Activated CD4-positive, alpha-beta memory T cell treated with anti-CD3 and anti-CD28 coated beads for 36 hours (primary cell): ENCODE measurements at regions of chr7 and their contacts with region 1.

Region 1: DNA sequence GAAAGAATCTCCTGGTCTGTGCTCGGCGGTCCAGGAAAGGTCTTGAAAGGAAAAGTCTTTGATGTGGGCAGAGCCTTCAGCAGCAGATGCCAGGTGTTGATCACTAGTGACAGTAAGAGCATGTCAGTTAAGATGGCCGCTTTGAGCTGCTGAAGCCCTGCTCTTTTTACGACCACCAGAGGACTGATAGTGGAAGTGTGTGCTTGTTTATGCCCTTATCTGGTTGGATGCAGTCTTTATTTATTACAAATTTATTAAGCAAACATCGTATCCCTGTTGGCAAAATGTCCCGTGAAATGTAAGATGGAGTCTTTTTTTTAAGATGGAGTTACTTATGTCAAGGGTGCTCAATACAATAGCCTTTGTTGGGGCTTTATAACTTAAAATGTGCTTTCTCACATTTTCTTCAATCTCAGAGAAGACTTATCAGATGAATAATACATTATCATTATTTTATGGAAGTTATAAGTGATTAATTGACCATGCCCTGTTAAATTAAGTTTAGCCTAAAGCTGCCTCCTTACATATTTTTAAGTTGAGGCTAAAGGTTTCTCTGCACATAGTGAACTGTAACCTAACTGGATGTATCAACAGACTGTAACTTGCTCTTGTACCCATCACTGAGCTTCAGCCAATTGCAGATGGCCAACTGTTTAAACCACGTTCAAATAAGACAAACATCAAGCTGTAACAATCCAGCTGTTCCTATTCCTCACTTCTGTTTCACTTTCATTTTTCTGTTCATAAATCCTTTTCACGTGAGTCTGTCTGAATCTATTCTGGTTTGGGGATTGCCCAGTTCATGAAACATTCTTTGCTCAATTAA is 97.4 kb upstream of the PIK3CG start:
- DNase-seq: peak; percentile 18
- H3K4me3 Mint-ChIP-seq: peak overlapping the region; percentile 42
- H3K27ac Mint-ChIP-seq: peak overlapping the region; percentile 65
- H3K4me1 Mint-ChIP-seq: peaks cover 49% of the 10 kb centered on the region
- H3K27me3 Mint-ChIP-seq: no peaks in the 10 kb centered on the region

Region 2: DNA sequence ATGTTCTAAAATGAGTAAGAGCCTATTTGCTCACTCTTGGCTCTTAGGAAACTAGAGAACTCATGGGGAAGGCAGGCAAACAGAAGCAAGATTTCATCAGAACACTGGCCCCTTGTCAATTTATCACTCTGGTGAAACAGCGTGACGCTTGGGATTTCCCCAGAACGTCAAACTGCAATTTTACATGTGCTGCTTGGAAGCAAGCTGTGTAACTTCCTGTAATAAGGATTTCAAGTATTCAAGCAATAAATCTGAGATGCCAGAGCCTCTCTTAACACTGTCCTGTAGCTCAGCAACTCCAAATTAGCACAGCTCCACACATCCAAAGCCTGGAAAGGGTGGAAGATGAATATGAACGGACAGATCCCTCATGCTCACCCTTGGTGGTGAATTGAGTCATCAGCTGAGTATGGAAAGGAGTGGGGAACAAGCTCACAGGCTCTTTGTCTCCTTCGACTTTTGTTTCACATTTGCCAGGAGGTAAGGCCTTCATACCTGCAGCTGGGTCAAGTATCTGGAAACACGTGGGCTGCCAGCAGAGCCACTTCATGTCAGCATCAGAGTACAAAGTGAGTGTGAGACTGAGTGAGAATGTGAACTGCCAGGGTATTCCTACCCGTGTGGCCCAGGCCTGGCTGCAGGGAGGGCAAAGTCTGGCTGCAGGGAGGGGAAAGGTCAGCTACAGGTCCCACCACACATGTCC is 342.5 kb before region 1 on chr7:
- CTCF ChIA-PET with region 1: no interaction called
- POLR2A ChIA-PET with region 1: no interaction called
- intact Hi-C with region 1: loop called (anchors 5 kb)
- DNase-seq: peak; percentile 91
- H3K4me3 Mint-ChIP-seq: peak overlapping the region; percentile 65
- H3K27ac Mint-ChIP-seq: peak overlapping the region; percentile 97
- H3K4me1 Mint-ChIP-seq: peaks cover 81% of the 10 kb centered on the region
- H3K27me3 Mint-ChIP-seq: no peaks in the 10 kb centered on the region

Region 3: DNA sequence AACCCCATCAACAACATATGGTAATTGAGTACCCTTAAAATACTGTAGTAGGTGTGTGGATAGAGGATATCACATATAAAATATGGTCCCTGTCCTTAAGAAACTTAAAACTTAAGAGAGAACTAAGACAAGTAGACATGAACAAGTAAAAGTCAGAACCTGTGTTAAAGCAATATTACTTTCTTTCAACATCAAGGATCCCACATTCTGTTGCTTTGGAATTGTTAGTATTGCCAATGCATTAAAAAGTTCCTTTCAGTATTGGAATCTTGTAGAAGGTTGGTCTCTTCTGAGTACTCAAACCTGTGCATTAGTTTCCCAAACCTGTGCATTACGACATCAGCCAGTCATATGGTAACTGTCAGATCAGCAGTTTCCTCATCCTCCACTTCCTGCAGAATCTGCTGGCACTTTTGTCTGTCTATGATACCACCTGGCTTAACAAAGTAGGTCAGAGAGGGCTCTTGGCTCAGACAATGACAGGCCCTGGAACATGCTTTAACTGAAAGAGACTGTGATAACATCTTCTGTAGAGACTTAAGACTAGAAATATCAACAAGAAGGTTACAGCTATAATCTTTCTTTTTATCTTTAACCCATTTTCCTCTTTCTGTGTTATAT is 163.3 kb before region 1 on chr7:
- CTCF ChIA-PET with region 1: no interaction called
- POLR2A ChIA-PET with region 1: no interaction called
- intact Hi-C with region 1: loop called (anchors 1 kb)
- DNase-seq: peak; percentile 68
- H3K4me3 Mint-ChIP-seq: no peak overlapping the region
- H3K27ac Mint-ChIP-seq: no peak overlapping the region
- H3K4me1 Mint-ChIP-seq: peaks cover 15% of the 10 kb centered on the region
- H3K27me3 Mint-ChIP-seq: no peaks in the 10 kb centered on the region

Region 4: GRCh38 chr7:106744563-106745091 is 23.1 kb before region 1 on chr7:
- CTCF ChIA-PET with region 1: interaction called, 3 read pairs
- POLR2A ChIA-PET with region 1: no interaction called
- intact Hi-C with region 1: loop called (anchors 2 kb)
- DNase-seq: peak; percentile 37
- H3K4me3 Mint-ChIP-seq: no peak overlapping the region
- H3K27ac Mint-ChIP-seq: no peak overlapping the region
- H3K4me1 Mint-ChIP-seq: peaks cover 4% of the 10 kb centered on the region
- H3K27me3 Mint-ChIP-seq: peaks cover 6% of the 10 kb centered on the region

Region 5: DNA sequence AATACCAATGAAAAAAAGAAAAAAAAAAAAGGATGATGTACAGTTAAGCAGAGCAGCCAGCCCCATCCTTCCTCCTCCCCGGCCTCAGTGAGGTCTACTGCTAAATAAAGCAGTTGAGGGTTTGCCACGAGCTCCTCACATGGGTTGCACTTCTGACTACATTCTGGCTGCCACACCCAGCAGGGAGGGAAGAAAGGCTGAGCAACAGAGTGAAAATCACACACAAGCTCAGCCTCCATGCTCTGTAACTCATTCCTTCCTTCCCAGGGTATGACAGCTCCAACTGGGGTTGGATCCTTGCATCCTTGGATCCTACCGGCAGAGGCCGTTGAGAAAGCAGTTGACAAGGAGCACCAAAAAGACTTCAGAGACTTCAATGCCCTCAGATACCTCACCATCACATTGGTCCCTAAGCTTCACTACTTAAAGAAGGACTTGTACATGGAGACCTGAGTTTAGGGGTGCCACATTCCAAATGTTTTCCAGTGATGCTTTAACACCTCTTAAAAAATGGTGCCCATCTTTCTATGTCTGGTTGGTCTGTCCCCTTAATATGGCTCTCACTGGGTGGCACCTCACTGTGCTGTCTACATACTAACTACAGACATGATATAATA is 44.4 kb after region 1 on chr7:
- CTCF ChIA-PET with region 1: no interaction called
- POLR2A ChIA-PET with region 1: no interaction called
- intact Hi-C with region 1: no loop called
- DNase-seq: no peak
- H3K4me3 Mint-ChIP-seq: no peak overlapping the region
- H3K27ac Mint-ChIP-seq: no peak overlapping the region
- H3K4me1 Mint-ChIP-seq: no peaks in the 10 kb centered on the region
- H3K27me3 Mint-ChIP-seq: peaks cover 2% of the 10 kb centered on the region

Region 6: GRCh38 chr7:106848851-106849442 is 81.2 kb after region 1 on chr7:
- CTCF ChIA-PET with region 1: no interaction called
- POLR2A ChIA-PET with region 1: no interaction called
- intact Hi-C with region 1: no loop called
- DNase-seq: no peak
- H3K4me3 Mint-ChIP-seq: no peak overlapping the region
- H3K27ac Mint-ChIP-seq: no peak overlapping the region
- H3K4me1 Mint-ChIP-seq: peaks cover 2% of the 10 kb centered on the region
- H3K27me3 Mint-ChIP-seq: peaks cover 4% of the 10 kb centered on the region

Region 7: GRCh38 chr7:106870983-106871410 is 103.3 kb after region 1 on chr7:
- CTCF ChIA-PET with region 1: no interaction called
- POLR2A ChIA-PET with region 1: no interaction called
- intact Hi-C with region 1: loop called (anchors 2 kb)
- DNase-seq: no peak
- H3K4me3 Mint-ChIP-seq: no peak overlapping the region
- H3K27ac Mint-ChIP-seq: peak overlapping the region; percentile 40
- H3K4me1 Mint-ChIP-seq: peaks cover 69% of the 10 kb centered on the region
- H3K27me3 Mint-ChIP-seq: no peaks in the 10 kb centered on the region

Region 8: DNA sequence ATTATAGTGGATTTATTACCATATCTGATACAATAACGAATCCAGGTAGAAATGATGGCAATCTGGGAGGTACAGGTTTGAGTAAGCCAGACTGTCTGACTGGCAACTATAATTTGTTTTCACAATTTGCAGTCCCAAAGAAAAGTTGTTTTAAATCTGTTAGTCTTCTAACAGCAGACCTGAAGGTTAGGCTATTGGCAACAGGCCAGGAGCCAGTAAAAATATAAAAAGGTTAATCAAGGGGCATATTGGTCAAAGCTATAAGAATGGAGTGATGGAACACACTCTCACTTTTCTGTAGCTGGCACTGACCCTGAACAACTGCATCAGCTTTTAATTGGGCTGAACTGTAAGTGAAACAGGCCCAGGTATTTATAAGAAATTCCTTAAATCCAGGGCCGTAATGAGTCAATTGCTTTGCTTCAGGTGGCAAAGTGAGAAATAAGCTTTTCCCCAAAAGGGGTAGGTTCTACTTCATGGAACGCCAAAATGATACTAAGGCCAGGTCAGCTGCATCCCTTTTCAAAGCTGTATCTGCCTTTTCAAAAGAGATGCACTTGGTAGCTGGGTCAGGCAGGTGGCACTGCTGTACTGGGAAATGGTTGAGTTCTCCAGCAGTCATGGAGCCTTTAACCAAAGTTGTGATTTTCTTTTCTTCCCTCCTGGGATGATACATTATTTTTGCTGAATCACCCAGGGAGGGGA is 695.2 kb after region 1 on chr7:
- CTCF ChIA-PET with region 1: no interaction called
- POLR2A ChIA-PET with region 1: no interaction called
- intact Hi-C with region 1: no loop called
- DNase-seq: peak; percentile 61
- H3K4me3 Mint-ChIP-seq: no peak overlapping the region
- H3K27ac Mint-ChIP-seq: no peak overlapping the region
- H3K4me1 Mint-ChIP-seq: no peaks in the 10 kb centered on the region
- H3K27me3 Mint-ChIP-seq: no peaks in the 10 kb centered on the region